ENCODE measurements at regions of chrX and their contacts with region 1.

Region 1: DNA sequence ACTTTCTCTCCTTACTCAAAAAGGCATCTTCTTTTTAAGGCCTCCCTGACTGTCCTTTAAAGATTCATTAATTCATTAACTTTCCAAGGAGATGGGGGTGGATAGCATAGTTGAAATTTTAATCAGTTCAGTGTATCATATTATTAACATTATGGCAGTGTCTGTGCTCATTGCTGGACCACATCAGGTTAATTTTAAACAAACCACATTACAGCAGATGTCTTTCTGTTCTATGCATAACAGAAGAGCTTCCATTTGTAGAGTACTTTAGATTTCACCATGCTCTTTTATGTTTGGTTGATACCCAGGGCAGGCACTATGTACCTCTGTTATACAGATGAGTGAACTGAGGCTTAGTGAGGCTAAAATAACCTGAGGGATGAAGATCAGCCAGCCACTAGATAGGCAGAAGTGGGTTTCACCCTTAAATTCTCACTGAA is 41.1 kb downstream of the AFF2 start:
- DNase-seq: no peak
- ATAC-seq: no peak
- H3K4me3 Mint-ChIP-seq: no peak overlapping the region
- H3K27ac Mint-ChIP-seq: no peak overlapping the region
- H3K4me1 Mint-ChIP-seq: peaks cover 54% of the 10 kb centered on the region
- H3K27me3 Mint-ChIP-seq: no peaks in the 10 kb centered on the region
- CTCF ChIP-seq: no peak

Region 2: GRCh38 chrX:148530464-148531077 is 11.0 kb before region 1 on chrX:
- CTCF ChIA-PET with region 1: interaction called, 11 read pairs
- POLR2A ChIA-PET with region 1: interaction called, 4 read pairs
- intact Hi-C with region 1: no loop called
- DNase-seq: no peak
- ATAC-seq: no peak
- H3K4me3 Mint-ChIP-seq: no peak overlapping the region
- H3K27ac Mint-ChIP-seq: no peak overlapping the region
- H3K4me1 Mint-ChIP-seq: no peaks in the 10 kb centered on the region
- H3K27me3 Mint-ChIP-seq: no peaks in the 10 kb centered on the region
- CTCF ChIP-seq: no peak

Measured in activated B cell treated with CpG ODN at 0.5 μM for 24 hours (primary cell).